ENCODE measurements at regions of chr2 and their contacts with region 1.

Region 1: GRCh38 chr2:18795906-18796305 is 206.5 kb upstream of the NT5C1B start:
- DNase-seq: no peak
- H3K4me3 ChIP-seq: no peak overlapping the region
- H3K27ac ChIP-seq: no peak overlapping the region
- H3K4me1 ChIP-seq: no peaks in the 10 kb centered on the region
- H3K27me3 ChIP-seq: no peaks in the 10 kb centered on the region
- CTCF ChIP-seq: no peak

Region 2: GRCh38 chr2:20382965-20383810 is 1587.3 kb after region 1 on chr2:
- CTCF ChIA-PET with region 1: no interaction called
- POLR2A ChIA-PET with region 1: interaction called, 11 read pairs
- intact Hi-C with region 1: no loop called
- DNase-seq: peak in 1 of 2 experiments; percentile 33
- H3K4me3 ChIP-seq: no peak overlapping the region
- H3K27ac ChIP-seq: no peak overlapping the region
- H3K4me1 ChIP-seq: peaks cover 26% of the 10 kb centered on the region
- H3K27me3 ChIP-seq: no peaks in the 10 kb centered on the region
- CTCF ChIP-seq: no peak